Activated CD4-positive, alpha-beta T cell treated with anti-CD3 and anti-CD28 coated beads for 36 hours (primary cell): ENCODE measurements at regions of chr6 and their contacts with region 1.

Region 1: GRCh38 chr6:158009114-158009891 is 27.6 kb downstream of the SYNJ2 start:
- DNase-seq: peak; percentile 59
- ATAC-seq: peak; percentile 47
- H3K4me3 Mint-ChIP-seq: peak overlapping the region; percentile 54
- H3K27ac Mint-ChIP-seq: peak overlapping the region; percentile 55
- H3K4me1 Mint-ChIP-seq: peaks cover 77% of the 10 kb centered on the region
- H3K27me3 Mint-ChIP-seq: no peaks in the 10 kb centered on the region

Region 2: GRCh38 chr6:157613011-157613522 is 396.2 kb before region 1 on chr6:
- CTCF ChIA-PET with region 1: no interaction called
- POLR2A ChIA-PET with region 1: interaction called, 11 read pairs
- intact Hi-C with region 1: no loop called
- DNase-seq: no peak
- ATAC-seq: peak; percentile 65
- H3K4me3 Mint-ChIP-seq: no peak overlapping the region
- H3K27ac Mint-ChIP-seq: peak overlapping the region; percentile 17
- H3K4me1 Mint-ChIP-seq: peaks cover 4% of the 10 kb centered on the region
- H3K27me3 Mint-ChIP-seq: no peaks in the 10 kb centered on the region

Region 3: DNA sequence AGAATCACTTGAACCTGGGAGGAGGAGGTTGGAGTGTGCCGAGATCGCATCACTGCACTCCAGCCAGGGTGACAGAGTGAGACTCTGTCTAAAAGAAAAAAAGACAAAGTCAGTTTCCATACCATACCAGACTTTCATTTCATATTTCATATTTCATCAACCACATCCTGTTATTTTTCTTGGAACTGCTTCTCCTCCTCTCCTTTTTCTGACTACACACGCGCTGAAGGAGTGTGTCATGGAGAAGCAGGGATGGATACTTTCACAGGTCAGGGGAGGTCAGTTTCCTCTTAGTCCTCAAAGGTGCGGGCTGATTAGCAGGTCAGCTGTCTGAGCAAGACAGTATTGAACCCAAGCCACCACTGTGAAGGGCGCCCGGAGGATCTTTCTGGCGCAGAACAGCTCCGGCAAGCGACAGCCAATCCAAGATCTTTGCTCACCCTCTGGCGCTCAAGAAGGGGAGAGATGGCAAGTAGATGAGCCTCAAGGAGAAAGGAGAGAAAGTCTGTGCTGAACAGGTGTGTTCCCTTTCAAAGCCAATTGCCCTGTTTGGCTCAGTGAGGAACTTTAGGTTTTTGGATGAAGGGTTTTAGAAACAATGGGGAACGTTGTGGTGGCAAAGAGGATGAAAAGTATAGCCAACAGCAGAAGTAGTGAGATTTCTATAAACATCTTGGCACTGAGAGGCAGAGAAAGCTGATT is 46.6 kb before region 1 on chr6:
- CTCF ChIA-PET with region 1: no interaction called
- POLR2A ChIA-PET with region 1: no interaction called
- intact Hi-C with region 1: no loop called
- DNase-seq: peak; percentile 54
- ATAC-seq: peak; percentile 86
- H3K4me3 Mint-ChIP-seq: peak overlapping the region; percentile 43
- H3K27ac Mint-ChIP-seq: peak overlapping the region; percentile 92
- H3K4me1 Mint-ChIP-seq: peaks cover 28% of the 10 kb centered on the region
- H3K27me3 Mint-ChIP-seq: peaks cover 1% of the 10 kb centered on the region

Region 4: GRCh38 chr6:158220786-158221442 is 211.6 kb after region 1 on chr6:
- CTCF ChIA-PET with region 1: no interaction called
- POLR2A ChIA-PET with region 1: no interaction called
- intact Hi-C with region 1: no loop called
- DNase-seq: peak; percentile 86
- ATAC-seq: peak; percentile 97
- H3K4me3 Mint-ChIP-seq: no peak overlapping the region
- H3K27ac Mint-ChIP-seq: no peak overlapping the region
- H3K4me1 Mint-ChIP-seq: peaks cover 4% of the 10 kb centered on the region
- H3K27me3 Mint-ChIP-seq: peaks cover 1% of the 10 kb centered on the region

Region 5: GRCh38 chr6:158408552-158409130 is 399.3 kb after region 1 on chr6:
- CTCF ChIA-PET with region 1: no interaction called
- POLR2A ChIA-PET with region 1: no interaction called
- intact Hi-C with region 1: no loop called
- DNase-seq: no peak
- ATAC-seq: no peak
- H3K4me3 Mint-ChIP-seq: no peak overlapping the region
- H3K27ac Mint-ChIP-seq: no peak overlapping the region
- H3K4me1 Mint-ChIP-seq: peaks cover 2% of the 10 kb centered on the region
- H3K27me3 Mint-ChIP-seq: no peaks in the 10 kb centered on the region